Mammary epithelial cell (primary cell): ENCODE measurements at regions of chr22 and their contacts with region 1.

Region 1: GRCh38 chr22:50620593-50621355 is 7.2 kb downstream of the ARSA start:
- DNase-seq: peak; percentile 63
- H3K4me3 ChIP-seq: peak overlapping the region in 2 of 3 experiments; percentile 15 to 39
- H3K27ac ChIP-seq: peak overlapping the region; percentile 0
- H3K4me1 ChIP-seq: peaks cover 34% of the 10 kb centered on the region
- H3K27me3 ChIP-seq: no peaks in the 10 kb centered on the region
- CTCF ChIP-seq: no peak

Region 2: GRCh38 chr22:49930739-49931412 is 689.9 kb before region 1 on chr22:
- CTCF ChIA-PET with region 1: no interaction called
- dilution Hi-C with region 1: no loop called
- in situ Hi-C with region 1: no loop called
- intact Hi-C with region 1: loop called (anchors 5 kb)
- DNase-seq: peak; percentile 69
- H3K4me3 ChIP-seq: no peak overlapping the region
- H3K27ac ChIP-seq: no peak overlapping the region
- H3K4me1 ChIP-seq: peaks cover 13% of the 10 kb centered on the region
- H3K27me3 ChIP-seq: no peaks in the 10 kb centered on the region
- CTCF ChIP-seq: peak; percentile 20 to 73

Region 3: GRCh38 chr22:50341977-50342650 is 278.7 kb before region 1 on chr22:
- CTCF ChIA-PET with region 1: interaction called, 3 read pairs
- dilution Hi-C with region 1: no loop called
- in situ Hi-C with region 1: no loop called
- intact Hi-C with region 1: loop called (anchors 5 kb)
- DNase-seq: peak; percentile 75
- H3K4me3 ChIP-seq: peak overlapping the region; percentile 51 to 61 (median 55)
- H3K27ac ChIP-seq: no peak overlapping the region
- H3K4me1 ChIP-seq: peaks cover 7% of the 10 kb centered on the region
- H3K27me3 ChIP-seq: no peaks in the 10 kb centered on the region
- CTCF ChIP-seq: peak; percentile 99

Region 4: GRCh38 chr22:50456466-50457234 is 164.1 kb before region 1 on chr22:
- CTCF ChIA-PET with region 1: no interaction called
- dilution Hi-C with region 1: no loop called
- in situ Hi-C with region 1: no loop called
- intact Hi-C with region 1: no loop called
- DNase-seq: no peak
- H3K4me3 ChIP-seq: no peak overlapping the region
- H3K27ac ChIP-seq: no peak overlapping the region
- H3K4me1 ChIP-seq: no peaks in the 10 kb centered on the region
- H3K27me3 ChIP-seq: no peaks in the 10 kb centered on the region
- CTCF ChIP-seq: peak in 1 of 2 donors; percentile 25

Region 5: GRCh38 chr22:50507991-50508884 is 112.5 kb before region 1 on chr22 and contains the start of gene NCAPH2:
- CTCF ChIA-PET with region 1: interaction called, 4 read pairs
- dilution Hi-C with region 1: no loop called
- in situ Hi-C with region 1: no loop called
- intact Hi-C with region 1: loop called (anchors 5 kb)
- DNase-seq: peak; percentile 93
- H3K4me3 ChIP-seq: peak within 1 kb of the TSS; percentile 82 to 96 (median 95)
- H3K27ac ChIP-seq: peak within 1 kb of the TSS; percentile 59
- H3K4me1 ChIP-seq: peaks cover 37% of the 10 kb centered on the region
- H3K27me3 ChIP-seq: no peaks in the 10 kb centered on the region
- CTCF ChIP-seq: peak in 1 of 2 donors; percentile 16
- total RNA-seq, gene NCAPH2: 18.2 to 41.0 TPM

Region 6: GRCh38 chr22:50544078-50544745 is 76.6 kb before region 1 on chr22:
- CTCF ChIA-PET with region 1: no interaction called
- dilution Hi-C with region 1: no loop called
- in situ Hi-C with region 1: no loop called
- intact Hi-C with region 1: no loop called
- DNase-seq: no peak
- H3K4me3 ChIP-seq: peak overlapping the region in 1 of 3 experiments; percentile 22
- H3K27ac ChIP-seq: no peak overlapping the region
- H3K4me1 ChIP-seq: peaks cover 37% of the 10 kb centered on the region
- H3K27me3 ChIP-seq: peaks cover 4% of the 10 kb centered on the region
- CTCF ChIP-seq: peak in 1 of 2 donors; percentile 41

Region 7: GRCh38 chr22:50562523-50563412 is 58.0 kb before region 1 on chr22 and contains the start of gene SYCE3:
- CTCF ChIA-PET with region 1: no interaction called
- dilution Hi-C with region 1: no loop called
- in situ Hi-C with region 1: no loop called
- intact Hi-C with region 1: loop called (anchors 1 kb)
- DNase-seq: peak; percentile 91
- H3K4me3 ChIP-seq: peak within 1 kb of the TSS; percentile 57 to 79 (median 69)
- H3K27ac ChIP-seq: no peak within 1 kb of the TSS
- H3K4me1 ChIP-seq: peaks cover 15% of the 10 kb centered on the region
- H3K27me3 ChIP-seq: no peaks in the 10 kb centered on the region
- CTCF ChIP-seq: peak; percentile 75 to 92
- total RNA-seq, gene SYCE3: not detected

Region 8: DNA sequence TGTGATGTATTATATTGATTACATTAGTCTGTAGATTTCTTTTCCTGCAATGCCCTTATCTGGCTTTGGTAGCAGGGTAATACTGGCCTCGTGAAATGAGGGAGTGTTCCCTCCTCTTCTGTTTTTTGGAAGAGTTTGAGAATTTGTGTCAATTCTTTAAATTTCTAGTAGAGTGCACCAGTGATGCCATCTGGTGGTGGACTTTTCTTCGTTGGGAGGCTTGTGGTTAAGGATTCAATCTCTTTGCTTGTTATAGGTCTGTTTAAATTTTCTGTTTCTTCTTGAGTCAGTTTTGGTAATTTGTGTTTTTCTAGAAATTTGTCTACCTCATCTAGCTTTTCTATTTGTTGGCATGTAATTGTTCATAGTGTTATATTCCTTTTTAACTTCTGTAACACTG is 70.7 kb after region 1 on chr22:
- CTCF ChIA-PET with region 1: no interaction called
- dilution Hi-C with region 1: loop called (anchors 5 kb)
- in situ Hi-C with region 1: no loop called
- intact Hi-C with region 1: loop called (anchors 1 kb)
- DNase-seq: peak; percentile 28
- H3K4me3 ChIP-seq: no peak overlapping the region
- H3K27ac ChIP-seq: no peak overlapping the region
- H3K4me1 ChIP-seq: peaks cover 14% of the 10 kb centered on the region
- H3K27me3 ChIP-seq: no peaks in the 10 kb centered on the region
- CTCF ChIP-seq: peak; percentile 63 to 72